ENCODE measurements at regions of chr9 and their contacts with region 1.

Region 1: DNA sequence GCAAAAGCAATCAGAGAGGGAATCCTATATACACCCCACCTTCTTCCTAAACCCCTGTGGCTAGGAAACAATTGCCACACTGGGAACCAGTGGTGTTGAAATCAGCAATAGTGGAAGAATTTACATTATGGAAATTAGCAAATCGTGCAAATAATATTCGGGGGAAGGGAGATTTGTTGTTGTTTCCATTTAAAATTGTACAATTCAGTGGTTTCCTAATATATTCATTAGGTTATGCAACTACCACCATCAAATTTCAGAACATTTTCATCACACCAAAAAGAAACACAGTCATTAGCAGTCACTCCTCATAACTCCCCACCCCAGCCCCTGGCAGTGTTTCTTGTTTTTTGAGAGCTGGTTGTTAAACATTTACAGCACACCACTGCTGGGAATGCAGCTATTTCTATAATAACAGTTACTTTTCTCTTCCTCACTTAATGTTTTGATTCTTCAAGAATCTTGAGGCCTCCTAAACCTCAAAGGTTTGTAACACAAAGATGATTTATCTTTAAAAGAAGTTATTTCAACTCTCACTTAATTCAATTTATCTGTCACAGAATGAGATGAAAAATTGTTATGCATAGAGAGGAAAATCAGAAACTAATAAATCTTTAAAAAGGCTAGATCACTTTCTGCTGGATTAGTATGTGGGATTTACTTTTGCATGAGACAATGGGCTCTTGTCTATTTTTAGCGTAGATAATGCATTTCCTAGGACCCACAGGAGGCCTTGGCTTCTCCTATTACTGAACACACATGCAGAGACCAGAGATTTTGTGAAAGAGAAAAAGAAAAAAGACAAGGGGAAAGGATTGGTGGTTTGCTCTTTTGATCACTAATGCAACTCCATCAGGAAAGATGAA is 91.8 kb upstream of the DAPK1 start:
- DNase-seq: no peak
- H3K4me3 ChIP-seq: no peak overlapping the region
- H3K27ac ChIP-seq: no peak overlapping the region
- H3K4me1 ChIP-seq: peaks cover 12% of the 10 kb centered on the region
- H3K27me3 ChIP-seq: no peaks in the 10 kb centered on the region
- CTCF ChIP-seq: no peak

Region 2: GRCh38 chr9:87193925-87194868 is 211.7 kb before region 1 on chr9:
- CTCF ChIA-PET with region 1: no interaction called
- dilution Hi-C with region 1: no loop called
- in situ Hi-C with region 1: no loop called
- intact Hi-C with region 1: no loop called
- DNase-seq: peak; percentile 94
- H3K4me3 ChIP-seq: no peak overlapping the region
- H3K27ac ChIP-seq: peak overlapping the region; percentile 80
- H3K4me1 ChIP-seq: peaks cover 42% of the 10 kb centered on the region
- H3K27me3 ChIP-seq: no peaks in the 10 kb centered on the region
- CTCF ChIP-seq: no peak

Region 3: GRCh38 chr9:87389936-87390335 is 16.0 kb before region 1 on chr9:
- CTCF ChIA-PET with region 1: no interaction called
- dilution Hi-C with region 1: no loop called
- in situ Hi-C with region 1: no loop called
- intact Hi-C with region 1: loop called (anchors 2 kb)
- DNase-seq: no peak
- H3K4me3 ChIP-seq: no peak overlapping the region
- H3K27ac ChIP-seq: no peak overlapping the region
- H3K4me1 ChIP-seq: peaks cover 31% of the 10 kb centered on the region
- H3K27me3 ChIP-seq: no peaks in the 10 kb centered on the region
- CTCF ChIP-seq: no peak